IMR-90 (cell line): ENCODE measurements at regions of chr10 and their contacts with region 1.

Region 1: DNA sequence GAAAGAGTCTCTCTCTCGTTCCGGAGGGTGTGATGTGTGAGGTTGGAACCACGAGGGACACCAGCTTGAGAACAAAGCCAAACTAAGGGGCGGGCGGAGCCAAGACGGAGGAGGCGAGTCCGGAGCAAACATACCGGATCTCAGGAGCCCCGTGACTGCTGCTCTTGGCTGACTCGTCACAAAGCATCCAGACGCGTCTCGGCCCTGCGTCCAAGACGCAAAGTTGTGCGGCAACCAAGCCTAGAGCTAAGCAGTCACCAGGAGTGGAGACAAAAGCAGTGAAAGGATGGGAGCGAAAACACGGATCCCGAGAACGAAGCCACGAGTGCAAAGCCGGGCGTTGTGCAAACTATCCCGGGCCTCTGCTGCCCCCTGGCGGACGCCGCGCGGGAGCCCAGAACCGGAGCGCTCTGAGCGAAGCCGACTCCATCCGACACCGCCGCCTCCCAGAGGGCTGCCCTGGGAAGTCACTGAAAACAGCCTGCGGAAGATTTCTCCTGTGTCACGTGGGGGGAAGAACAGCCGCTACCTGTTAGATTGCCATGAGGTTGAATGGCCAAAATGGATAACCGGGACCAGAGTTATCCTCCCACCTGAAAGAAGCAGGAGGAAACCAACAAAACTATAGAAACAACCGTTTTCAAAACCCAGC is 46.4 kb upstream of the TMEM72 start:
- DNase-seq: peak; percentile 75
- ATAC-seq: peak; percentile 94
- H3K4me3 ChIP-seq: peak overlapping the region; percentile 68
- H3K27ac ChIP-seq: peak overlapping the region; percentile 65
- H3K4me1 ChIP-seq: peaks cover 4% of the 10 kb centered on the region; the same call in 1 of the 2 replicates
- H3K27me3 ChIP-seq: peaks cover 3% of the 10 kb centered on the region; the same call in 1 of the 2 replicates
- CTCF ChIP-seq: peak; percentile 98
- POLR2A ChIP-seq: no peak
- RAD21 ChIP-seq: peak; percentile 94

Region 2: DNA sequence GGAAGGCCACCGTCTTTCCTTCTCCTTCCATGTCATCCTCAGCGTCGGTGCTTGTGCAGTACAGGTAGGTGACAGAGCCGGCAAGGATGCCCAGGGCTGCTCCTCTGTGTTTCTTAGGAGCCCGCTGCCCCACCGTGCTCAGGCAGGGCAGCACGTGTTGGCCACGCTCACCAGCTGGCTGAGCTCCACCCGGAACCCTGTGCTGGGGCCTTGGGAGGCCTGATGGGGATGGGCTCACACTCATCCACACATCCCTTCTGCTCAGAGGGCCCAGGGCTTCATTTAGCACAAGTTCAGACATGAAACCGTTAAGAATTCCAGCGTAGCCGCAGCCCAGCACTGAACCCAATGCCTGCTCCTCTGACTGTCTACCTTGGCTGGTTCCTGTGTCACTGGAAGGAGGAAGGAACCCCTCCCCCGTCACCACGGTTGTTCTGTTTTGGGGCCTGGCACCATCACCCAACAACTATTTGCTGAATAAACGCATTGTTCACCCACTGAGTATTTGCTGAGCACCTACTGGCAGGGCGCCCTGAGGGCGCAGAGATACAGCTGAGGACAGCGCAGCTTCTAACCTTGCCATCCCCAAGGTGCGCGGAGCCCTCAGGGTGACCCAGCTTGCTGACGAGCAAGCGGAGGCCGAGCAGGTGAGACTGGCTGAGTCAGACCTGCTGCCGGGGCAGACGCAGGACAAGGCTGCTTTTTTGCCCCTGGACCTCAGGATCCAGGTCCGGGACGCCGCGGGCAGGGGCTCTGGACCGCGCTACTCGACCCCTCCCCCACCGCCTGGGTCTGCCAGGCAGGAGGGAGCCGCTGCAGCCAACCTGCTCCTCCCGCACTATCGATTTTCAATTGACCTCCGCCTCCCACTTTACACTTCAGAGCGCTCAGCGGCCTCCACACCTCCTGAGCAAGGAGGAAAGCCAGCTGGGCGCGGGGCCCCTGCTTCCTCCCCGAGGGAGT is 1838.5 kb before region 1 on chr10:
- CTCF ChIA-PET with region 1: no interaction called
- POLR2A ChIA-PET with region 1: no interaction called
- dilution Hi-C with region 1: no loop called
- in situ Hi-C with region 1: no loop called
- intact Hi-C with region 1: no loop called
- DNase-seq: no peak
- ATAC-seq: no peak
- H3K4me3 ChIP-seq: no peak overlapping the region
- H3K27ac ChIP-seq: no peak overlapping the region
- H3K4me1 ChIP-seq: no peaks in the 10 kb centered on the region
- H3K27me3 ChIP-seq: peaks cover 15% of the 10 kb centered on the region
- CTCF ChIP-seq: no peak
- POLR2A ChIP-seq: no peak
- RAD21 ChIP-seq: no peak

Region 3: DNA sequence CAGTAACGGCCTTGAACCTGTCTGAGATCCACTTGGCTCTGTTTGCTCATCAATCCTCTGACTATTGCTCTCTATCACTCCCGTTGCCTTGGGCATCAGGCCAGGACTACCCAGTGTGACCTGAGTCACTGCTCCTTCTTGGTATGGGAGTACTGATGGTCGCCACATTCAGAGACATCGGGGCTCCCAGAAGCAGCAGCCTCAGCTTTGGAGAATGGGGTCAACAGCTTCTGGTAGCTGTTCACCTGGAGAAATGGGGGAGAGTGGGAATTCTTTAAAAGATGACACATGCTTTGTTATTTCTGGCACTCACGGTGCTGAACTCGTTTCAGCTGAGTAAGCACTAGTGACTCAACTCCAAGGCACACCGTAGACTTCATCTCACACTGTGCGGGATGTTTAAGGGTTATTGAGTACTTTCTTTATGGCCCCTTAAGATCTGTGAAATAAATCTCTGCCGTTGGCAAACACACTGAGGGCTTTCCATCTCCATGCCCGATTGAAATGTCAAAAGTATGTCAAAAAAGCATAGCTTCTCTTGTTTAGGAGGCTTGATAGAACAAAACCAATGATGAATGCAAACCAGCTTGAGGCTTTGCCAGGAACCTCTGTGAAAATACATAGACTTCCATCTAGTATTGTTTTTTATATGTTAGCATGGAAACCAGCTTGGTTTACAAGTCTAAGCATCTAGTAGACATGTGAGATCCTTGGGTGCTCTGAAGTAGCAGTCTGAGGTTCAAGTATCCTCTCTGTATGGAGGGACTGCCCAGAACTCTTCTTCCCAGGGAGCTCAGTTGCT is 813.0 kb before region 1 on chr10:
- CTCF ChIA-PET with region 1: interaction called, 3 read pairs
- POLR2A ChIA-PET with region 1: no interaction called
- dilution Hi-C with region 1: no loop called
- in situ Hi-C with region 1: loop called (anchors 25 kb)
- intact Hi-C with region 1: no loop called
- DNase-seq: peak; percentile 78
- ATAC-seq: peak; percentile 53
- H3K4me3 ChIP-seq: no peak overlapping the region
- H3K27ac ChIP-seq: no peak overlapping the region
- H3K4me1 ChIP-seq: peaks cover 3% of the 10 kb centered on the region
- H3K27me3 ChIP-seq: peaks cover 24% of the 10 kb centered on the region
- CTCF ChIP-seq: no peak
- POLR2A ChIP-seq: no peak
- RAD21 ChIP-seq: no peak

Region 4: DNA sequence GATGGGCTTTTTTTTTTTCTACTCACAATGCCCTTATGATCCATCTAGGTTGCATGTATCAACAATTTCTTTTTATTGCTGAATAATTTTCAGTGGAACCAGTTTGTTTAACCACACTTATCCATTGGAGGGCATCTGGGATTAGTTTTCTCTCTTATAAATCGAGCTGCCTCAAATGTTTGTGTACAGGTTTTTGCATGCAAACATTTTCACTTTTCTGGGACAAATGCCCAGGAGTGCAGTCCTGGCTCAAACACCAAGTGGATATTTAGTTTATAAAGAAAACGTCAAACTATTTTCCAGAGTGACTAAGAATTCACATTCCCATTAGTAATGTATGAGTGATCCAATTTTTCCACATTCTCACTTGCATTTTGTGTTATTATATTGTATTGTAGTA is 793.3 kb before region 1 on chr10:
- CTCF ChIA-PET with region 1: no interaction called
- POLR2A ChIA-PET with region 1: no interaction called
- dilution Hi-C with region 1: no loop called
- in situ Hi-C with region 1: loop called (anchors 25 kb)
- intact Hi-C with region 1: loop called (anchors 5 kb)
- DNase-seq: peak; percentile 90
- ATAC-seq: peak; percentile 84
- H3K4me3 ChIP-seq: no peak overlapping the region
- H3K27ac ChIP-seq: no peak overlapping the region
- H3K4me1 ChIP-seq: no peaks in the 10 kb centered on the region; the same call in 1 of the 2 replicates
- H3K27me3 ChIP-seq: peaks cover 4% of the 10 kb centered on the region; the same call in 1 of the 2 replicates
- CTCF ChIP-seq: no peak; the same call in 1 of the 2 replicates
- POLR2A ChIP-seq: no peak
- RAD21 ChIP-seq: no peak

Region 5: DNA sequence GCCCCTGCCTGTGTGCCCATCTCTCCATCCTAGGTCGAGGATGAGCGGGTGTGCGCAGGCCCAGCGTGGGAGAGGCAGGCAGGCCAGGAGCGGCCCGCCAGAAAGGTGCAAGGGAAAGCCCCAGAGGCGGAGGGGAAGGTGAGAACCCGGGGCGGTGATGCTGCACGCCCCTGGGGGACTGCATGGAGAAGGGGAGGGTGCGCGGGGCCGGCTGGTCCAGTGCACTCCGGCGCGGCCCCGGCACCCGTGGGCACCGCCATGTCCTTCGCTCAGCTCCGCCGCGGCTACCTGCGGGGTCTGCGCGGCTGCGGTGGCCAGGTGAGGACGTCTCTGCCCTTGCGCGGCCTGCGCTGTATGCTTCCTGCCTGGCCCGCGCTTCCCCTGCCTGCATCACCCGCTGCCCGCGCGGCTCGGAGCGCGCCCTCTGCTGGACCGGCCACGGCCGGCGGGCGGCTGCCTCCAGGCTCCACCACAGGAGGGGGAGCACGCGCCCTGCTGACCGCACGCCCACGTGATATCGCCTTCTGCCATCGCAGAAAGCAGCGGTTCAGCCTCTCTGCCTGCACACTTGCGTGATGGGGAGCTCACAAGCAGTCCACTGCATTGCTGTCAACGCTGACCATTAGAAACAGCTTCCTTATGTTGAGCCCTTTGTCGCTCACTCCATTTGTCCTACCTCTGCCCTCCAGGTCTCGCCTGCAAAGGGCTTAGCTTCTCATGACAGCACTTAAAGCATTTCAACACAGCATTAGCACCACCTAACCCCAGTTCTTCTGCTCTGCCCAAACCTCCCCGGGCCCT is 553.8 kb before region 1 on chr10:
- CTCF ChIA-PET with region 1: no interaction called
- POLR2A ChIA-PET with region 1: no interaction called
- dilution Hi-C with region 1: no loop called
- in situ Hi-C with region 1: loop called (anchors 5 kb)
- intact Hi-C with region 1: loop called (anchors 2 kb)
- DNase-seq: peak; percentile 79
- ATAC-seq: peak; percentile 100
- H3K4me3 ChIP-seq: no peak overlapping the region
- H3K27ac ChIP-seq: no peak overlapping the region
- H3K4me1 ChIP-seq: peaks cover 6% of the 10 kb centered on the region
- H3K27me3 ChIP-seq: peaks cover 1% of the 10 kb centered on the region
- CTCF ChIP-seq: peak; percentile 98
- POLR2A ChIP-seq: no peak
- RAD21 ChIP-seq: peak; percentile 88

Region 6: GRCh38 chr10:45204954-45205775 is 340.4 kb after region 1 on chr10:
- CTCF ChIA-PET with region 1: no interaction called
- POLR2A ChIA-PET with region 1: no interaction called
- dilution Hi-C with region 1: no loop called
- in situ Hi-C with region 1: no loop called
- intact Hi-C with region 1: no loop called
- DNase-seq: no peak
- ATAC-seq: no peak
- H3K4me3 ChIP-seq: no peak overlapping the region
- H3K27ac ChIP-seq: no peak overlapping the region
- H3K4me1 ChIP-seq: no peaks in the 10 kb centered on the region
- H3K27me3 ChIP-seq: no peaks in the 10 kb centered on the region
- CTCF ChIP-seq: no peak
- POLR2A ChIP-seq: no peak
- RAD21 ChIP-seq: no peak